ENCODE measurements at regions of chr14 and their contacts with region 1.

Region 1: GRCh38 chr14:102314242-102315011 is 5.1 kb upstream of the ZNF839 start:
- DNase-seq: no peak
- H3K4me3 ChIP-seq: peak overlapping the region; percentile 39
- H3K27me3 ChIP-seq: no peaks in the 10 kb centered on the region
- CTCF ChIP-seq: peak; percentile 98

Region 2: DNA sequence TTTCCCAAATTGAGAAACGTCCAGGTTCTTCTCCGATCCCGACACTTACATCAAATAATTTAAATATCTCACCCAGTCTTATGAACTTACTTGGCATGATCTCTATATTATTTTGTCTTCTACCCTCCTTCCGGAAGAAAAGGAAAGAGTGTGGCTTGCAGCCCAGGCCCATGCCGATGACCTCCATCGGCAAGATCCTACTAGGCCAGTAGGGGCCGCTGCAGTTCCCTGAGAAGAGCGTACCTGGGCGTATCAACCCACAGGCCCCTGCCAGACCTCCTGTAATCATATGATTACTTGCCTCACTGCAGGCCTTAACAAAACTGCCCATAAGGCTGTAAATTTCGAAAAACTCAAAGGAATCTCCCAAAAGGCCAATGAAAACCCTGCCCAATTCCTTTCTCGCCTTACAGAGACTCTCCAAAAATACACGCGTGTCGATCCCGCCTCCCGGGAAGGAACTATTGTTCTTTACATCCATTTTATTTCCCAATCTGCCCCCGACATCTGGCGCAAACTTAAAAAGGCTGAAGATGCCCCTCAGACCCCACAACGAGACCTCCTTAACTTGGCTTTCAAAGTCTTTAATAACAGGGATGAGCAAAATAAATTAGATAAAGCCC is 79.0 kb before region 1 on chr14:
- CTCF ChIA-PET with region 1: interaction called, 41 read pairs
- POLR2A ChIA-PET with region 1: no interaction called
- DNase-seq: peak; percentile 28
- H3K4me3 ChIP-seq: no peak overlapping the region
- H3K27me3 ChIP-seq: no peaks in the 10 kb centered on the region
- CTCF ChIP-seq: peak; percentile 91

Region 3: GRCh38 chr14:102255401-102256190 is 58.8 kb before region 1 on chr14:
- CTCF ChIA-PET with region 1: interaction called, 10 read pairs
- POLR2A ChIA-PET with region 1: no interaction called
- DNase-seq: no peak
- H3K4me3 ChIP-seq: no peak overlapping the region
- H3K27me3 ChIP-seq: no peaks in the 10 kb centered on the region
- CTCF ChIP-seq: no peak

Region 4: GRCh38 chr14:102295270-102295669 is 19.2 kb before region 1 on chr14:
- CTCF ChIA-PET with region 1: interaction called, 11 read pairs
- POLR2A ChIA-PET with region 1: no interaction called
- DNase-seq: no peak
- H3K4me3 ChIP-seq: no peak overlapping the region
- H3K27me3 ChIP-seq: no peaks in the 10 kb centered on the region
- CTCF ChIP-seq: peak; percentile 45

Measured in BJ (cell line).